Activated CD4-positive, alpha-beta T cell treated with anti-CD3 and anti-CD28 coated beads, Interleukin-2, amount 10 ng/mL, durations not matched to agents 24 days and 14 days (primary cell): ENCODE measurements at regions of chr1 and their contacts with region 1.

Region 1: GRCh38 chr1:51569284-51570062 is 47.4 kb upstream of the OSBPL9 start:
- DNase-seq: peak; percentile 78
- H3K4me3 Mint-ChIP-seq: peak overlapping the region; percentile 48
- H3K27ac Mint-ChIP-seq: peak overlapping the region; percentile 89
- H3K4me1 Mint-ChIP-seq: peaks cover 35% of the 10 kb centered on the region
- H3K27me3 Mint-ChIP-seq: no peaks in the 10 kb centered on the region

Region 2: GRCh38 chr1:51541313-51542174 is 27.9 kb before region 1 on chr1:
- intact Hi-C with region 1: loop called (anchors 1 kb)
- DNase-seq: no peak
- H3K4me3 Mint-ChIP-seq: peak overlapping the region; percentile 0
- H3K27ac Mint-ChIP-seq: peak overlapping the region; percentile 11
- H3K4me1 Mint-ChIP-seq: peaks cover 29% of the 10 kb centered on the region
- H3K27me3 Mint-ChIP-seq: no peaks in the 10 kb centered on the region

Region 3: GRCh38 chr1:51555866-51556619 is 13.4 kb before region 1 on chr1:
- intact Hi-C with region 1: loop called (anchors 2 kb)
- DNase-seq: no peak
- H3K4me3 Mint-ChIP-seq: no peak overlapping the region
- H3K27ac Mint-ChIP-seq: no peak overlapping the region
- H3K4me1 Mint-ChIP-seq: peaks cover 13% of the 10 kb centered on the region
- H3K27me3 Mint-ChIP-seq: no peaks in the 10 kb centered on the region

Region 4: DNA sequence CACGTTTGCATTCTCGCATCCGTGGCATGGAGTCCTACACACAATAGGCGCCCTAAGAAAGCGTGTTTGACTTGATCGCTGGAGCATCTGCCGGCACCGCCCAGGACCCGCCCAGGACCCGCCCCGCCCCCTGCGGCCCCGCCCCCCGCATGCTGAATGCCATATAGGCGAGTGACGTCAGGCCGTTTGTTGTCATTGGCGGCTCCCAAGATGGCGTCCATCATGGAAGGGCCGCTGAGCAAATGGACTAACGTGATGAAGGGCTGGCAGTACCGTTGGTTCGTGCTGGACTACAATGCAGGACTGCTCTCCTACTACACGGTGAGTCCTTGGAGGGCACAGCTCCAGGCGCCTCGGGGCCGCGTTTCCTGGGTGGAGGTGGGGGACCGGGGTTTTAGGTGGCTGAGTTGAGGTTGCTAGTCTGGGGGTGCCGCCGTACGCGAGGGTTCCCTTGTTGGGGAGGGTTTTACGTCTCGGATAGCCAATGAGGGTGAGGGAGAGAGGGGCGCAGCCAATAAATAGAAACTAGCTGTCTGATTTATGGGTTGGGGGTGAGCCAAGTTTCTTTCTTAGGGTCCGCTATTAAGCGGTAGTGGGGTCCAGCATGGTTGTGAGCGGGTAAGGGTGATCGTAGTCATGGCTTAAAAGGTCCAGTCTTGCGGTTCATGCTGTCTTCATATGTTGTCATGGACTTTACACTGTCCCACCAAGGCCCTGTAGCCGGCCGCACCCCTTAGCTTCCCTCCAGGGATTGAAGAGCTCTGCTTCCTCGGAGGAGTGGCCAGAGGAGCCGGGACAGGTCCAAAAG is 47.6 kb after region 1 on chr1 and contains the start of gene OSBPL9:
- intact Hi-C with region 1: loop called (anchors 5 kb)
- DNase-seq: peak; percentile 95
- H3K4me3 Mint-ChIP-seq: peak within 1 kb of the TSS; percentile 99
- H3K27ac Mint-ChIP-seq: peak within 1 kb of the TSS; percentile 97
- H3K4me1 Mint-ChIP-seq: peaks cover 23% of the 10 kb centered on the region
- H3K27me3 Mint-ChIP-seq: peaks cover 6% of the 10 kb centered on the region
- total RNA-seq, gene OSBPL9: 47.4 and 47.9 TPM in 2 replicates